ENCODE measurements at regions of chr9 and their contacts with region 1.

Region 1: GRCh38 chr9:109182940-109183798 is 16.1 kb upstream of the FRRS1L start:
- DNase-seq: peak; percentile 62 to 68
- ATAC-seq: peak; percentile 88 to 89
- H3K4me3 ChIP-seq: no peak overlapping the region
- H3K27ac ChIP-seq: no peak overlapping the region
- H3K4me1 ChIP-seq: 0 out of 3 replicates have a peak, but pooled peaks cover 3% of the 10 kb centered on the region
- CTCF ChIP-seq: peak; percentile 58
- EP300 ChIP-seq: no peak
- POLR2A ChIP-seq: no peak
- RAD21 ChIP-seq: peak; percentile 40 to 41; a peak in 3 of 5 replicates

Region 2: DNA sequence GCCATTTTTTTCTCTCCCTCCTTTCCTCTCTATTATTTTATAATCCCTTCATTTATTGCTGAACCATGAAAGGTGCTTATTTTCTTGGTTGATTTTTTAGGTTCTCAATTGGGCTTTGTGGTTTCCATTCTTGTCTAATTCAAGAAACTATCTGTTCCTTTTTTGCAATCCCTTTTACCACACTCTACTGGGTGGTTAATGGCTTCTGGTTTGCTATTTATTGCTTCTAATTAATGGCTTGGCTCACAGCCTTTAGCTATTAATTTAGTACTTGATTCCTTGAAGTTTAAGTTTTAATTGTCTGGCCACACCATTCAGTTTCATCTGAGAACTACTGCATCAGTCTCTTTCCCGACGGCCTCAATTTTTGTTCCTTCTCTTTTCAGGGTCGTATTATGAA is 21.7 kb before region 1 on chr9:
- CTCF ChIA-PET with region 1: interaction called, 14 read pairs
- POLR2A ChIA-PET with region 1: no interaction called
- DNase-seq: no peak
- ATAC-seq: no peak
- H3K4me3 ChIP-seq: no peak overlapping the region
- H3K27ac ChIP-seq: no peak overlapping the region
- H3K4me1 ChIP-seq: no peaks in the 10 kb centered on the region
- CTCF ChIP-seq: no peak
- EP300 ChIP-seq: no peak
- POLR2A ChIP-seq: no peak
- RAD21 ChIP-seq: no peak

Region 3: GRCh38 chr9:109205526-109205925 is 22.4 kb after region 1 on chr9:
- CTCF ChIA-PET with region 1: interaction called, 13 read pairs
- POLR2A ChIA-PET with region 1: no interaction called
- DNase-seq: no peak
- ATAC-seq: peak in 1 of 2 experiments; percentile 30; a peak in 1 of 6 replicates
- H3K4me3 ChIP-seq: no peak overlapping the region
- H3K27ac ChIP-seq: no peak overlapping the region
- H3K4me1 ChIP-seq: no peaks in the 10 kb centered on the region
- CTCF ChIP-seq: no peak
- EP300 ChIP-seq: no peak
- POLR2A ChIP-seq: no peak
- RAD21 ChIP-seq: no peak

Region 4: DNA sequence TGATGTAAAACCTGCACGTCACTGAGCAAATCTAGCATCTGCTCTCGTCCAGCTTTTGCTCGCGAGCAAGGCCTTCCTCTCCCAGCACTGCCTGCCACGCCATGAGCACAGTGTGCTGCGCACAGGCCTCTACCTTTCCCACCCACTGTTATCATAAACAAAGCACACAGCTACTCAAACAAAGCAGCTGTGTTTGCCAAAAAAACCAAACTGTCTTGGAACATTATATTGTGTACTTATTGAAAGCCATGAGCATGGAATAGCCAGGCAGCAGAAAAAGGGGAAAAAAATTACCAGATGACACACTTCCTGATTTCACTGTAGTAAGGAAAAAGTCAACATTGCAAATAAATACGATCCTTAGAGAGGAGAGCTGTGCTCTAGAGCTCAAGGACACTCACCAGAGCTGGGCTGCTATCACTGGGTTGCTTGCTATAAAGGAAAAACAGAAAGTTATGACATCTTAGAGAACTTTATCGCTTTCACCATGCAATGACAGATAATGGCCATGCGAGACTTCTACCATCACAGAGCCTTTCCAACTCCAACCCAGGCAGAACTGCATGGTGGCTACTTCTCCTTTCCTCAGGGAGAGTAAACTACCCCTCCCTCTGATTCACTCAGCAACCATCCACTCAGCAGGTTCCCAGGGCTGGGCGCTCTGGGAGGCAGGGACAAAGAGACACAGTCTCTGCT is 68.1 kb after region 1 on chr9:
- CTCF ChIA-PET with region 1: interaction called, 12 read pairs
- POLR2A ChIA-PET with region 1: no interaction called
- DNase-seq: peak; percentile 72 to 83
- ATAC-seq: peak; percentile 78 to 86
- H3K4me3 ChIP-seq: no peak overlapping the region
- H3K27ac ChIP-seq: peak overlapping the region; percentile 82 to 88
- H3K4me1 ChIP-seq: peaks cover 77% of the 10 kb centered on the region
- CTCF ChIP-seq: no peak
- EP300 ChIP-seq: peak; percentile 13 to 53; a peak in 2 of 5 replicates
- POLR2A ChIP-seq: no peak
- RAD21 ChIP-seq: peak in 1 of 2 experiments; percentile 21; a peak in 2 of 5 replicates

Region 5: GRCh38 chr9:109401168-109401989 is 218.2 kb after region 1 on chr9:
- CTCF ChIA-PET with region 1: interaction called, 11 read pairs
- POLR2A ChIA-PET with region 1: no interaction called
- DNase-seq: peak; percentile 67 to 74
- ATAC-seq: peak; percentile 98
- H3K4me3 ChIP-seq: no peak overlapping the region
- H3K27ac ChIP-seq: no peak overlapping the region
- H3K4me1 ChIP-seq: no peaks in the 10 kb centered on the region
- CTCF ChIP-seq: peak; percentile 91
- EP300 ChIP-seq: no peak
- POLR2A ChIP-seq: no peak
- RAD21 ChIP-seq: peak; percentile 78 to 80